ENCODE measurements at regions of chr7 and their contacts with region 1.

Region 1: GRCh38 chr7:142098004-142098403 is 13.5 kb upstream of the MGAM2 start:
- DNase-seq: no peak
- ATAC-seq: no peak
- H3K4me3 ChIP-seq: no peak overlapping the region
- H3K27ac ChIP-seq: no peak overlapping the region
- H3K4me1 ChIP-seq: no peaks in the 10 kb centered on the region
- H3K27me3 ChIP-seq: no peaks in the 10 kb centered on the region
- CTCF ChIP-seq: no peak

Region 2: DNA sequence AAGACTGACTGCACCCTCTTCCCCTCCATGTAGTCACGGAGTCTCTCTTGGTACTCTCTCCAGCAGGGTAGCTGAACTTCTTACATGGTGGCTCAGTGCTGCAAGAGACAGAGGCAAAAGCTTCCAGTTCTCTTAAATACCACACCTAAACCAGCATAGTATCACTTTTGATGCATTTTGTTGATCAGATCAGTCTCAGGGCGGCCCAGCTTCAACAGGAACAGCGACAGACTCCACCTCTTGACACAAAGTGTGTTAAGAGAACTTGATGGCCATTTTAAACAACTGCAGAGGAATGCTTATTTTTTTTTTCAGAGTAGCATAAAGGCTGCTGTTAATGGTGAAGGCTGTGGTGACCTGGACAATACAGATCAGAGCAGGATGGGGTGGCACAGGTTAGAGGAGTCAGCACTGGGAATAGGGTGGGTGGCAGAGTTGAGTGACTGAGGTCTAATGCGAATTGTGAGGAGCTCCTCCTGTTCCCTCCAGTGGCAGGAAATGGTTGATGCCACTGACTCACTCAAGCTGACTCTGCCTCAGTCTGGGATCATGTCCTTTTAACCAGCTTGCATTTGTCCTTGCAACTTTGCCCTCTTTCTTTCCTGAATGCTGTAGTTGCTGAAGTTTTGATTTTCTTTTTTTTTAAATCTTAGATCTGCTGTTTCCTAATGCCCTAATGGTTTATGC is 85.0 kb before region 1 on chr7:
- intact Hi-C with region 1: no loop called
- DNase-seq: no peak
- ATAC-seq: no peak
- H3K4me3 ChIP-seq: no peak overlapping the region
- H3K27ac ChIP-seq: no peak overlapping the region
- H3K4me1 ChIP-seq: no peaks in the 10 kb centered on the region
- H3K27me3 ChIP-seq: no peaks in the 10 kb centered on the region
- CTCF ChIP-seq: no peak

Region 3: DNA sequence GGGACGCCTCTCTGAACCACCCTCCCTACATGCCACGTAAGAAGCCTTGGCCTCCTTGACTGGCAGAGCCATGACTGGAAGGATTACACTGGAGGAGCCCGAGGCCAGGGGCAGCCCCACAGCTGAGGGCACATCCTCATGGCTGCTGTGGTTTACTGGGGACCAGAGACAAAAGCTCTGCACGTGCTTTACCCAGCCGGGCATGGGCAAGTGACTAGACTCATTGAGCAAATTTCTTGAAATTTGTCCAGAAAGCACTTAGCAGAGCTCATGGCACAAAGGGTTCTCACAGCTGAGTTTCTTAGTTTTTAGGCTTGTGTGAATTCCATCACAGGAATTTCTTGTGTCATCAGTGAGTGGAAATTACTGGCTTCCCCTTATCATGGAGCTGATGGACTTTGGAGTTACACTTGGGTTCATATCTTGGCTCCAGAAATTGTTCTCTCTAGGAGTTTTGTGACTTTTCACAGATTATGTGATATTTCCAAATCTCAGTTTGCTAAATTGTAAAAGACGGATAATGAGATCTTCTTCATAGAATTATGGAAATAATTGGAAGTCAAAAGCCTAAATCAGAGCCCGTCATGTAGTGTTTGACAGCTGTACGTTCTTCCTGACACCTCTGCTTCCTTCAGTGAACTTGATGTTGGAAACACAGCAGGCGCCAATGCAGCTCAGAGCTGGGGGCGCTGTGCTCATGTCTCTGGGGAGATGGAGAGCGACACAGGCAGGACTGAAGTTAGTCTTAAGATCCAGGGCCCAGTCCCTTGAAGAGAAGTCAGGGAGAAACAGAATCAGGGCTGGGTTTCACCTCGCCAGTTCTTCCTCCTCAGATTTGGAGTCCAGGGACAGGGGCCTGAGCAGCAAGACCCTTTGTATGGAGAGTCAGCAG is 34.2 kb before region 1 on chr7:
- intact Hi-C with region 1: loop called in 1 of 10 experiments (anchors 2 kb)
- DNase-seq: no peak
- ATAC-seq: no peak
- H3K4me3 ChIP-seq: no peak overlapping the region
- H3K27ac ChIP-seq: no peak overlapping the region
- H3K4me1 ChIP-seq: no peaks in the 10 kb centered on the region
- H3K27me3 ChIP-seq: no peaks in the 10 kb centered on the region
- CTCF ChIP-seq: no peak

Measured in heart right ventricle (tissue), 16 donors.